WTC11 (cell line): ENCODE measurements at regions of chr13 and their contacts with region 1.

Region 1: DNA sequence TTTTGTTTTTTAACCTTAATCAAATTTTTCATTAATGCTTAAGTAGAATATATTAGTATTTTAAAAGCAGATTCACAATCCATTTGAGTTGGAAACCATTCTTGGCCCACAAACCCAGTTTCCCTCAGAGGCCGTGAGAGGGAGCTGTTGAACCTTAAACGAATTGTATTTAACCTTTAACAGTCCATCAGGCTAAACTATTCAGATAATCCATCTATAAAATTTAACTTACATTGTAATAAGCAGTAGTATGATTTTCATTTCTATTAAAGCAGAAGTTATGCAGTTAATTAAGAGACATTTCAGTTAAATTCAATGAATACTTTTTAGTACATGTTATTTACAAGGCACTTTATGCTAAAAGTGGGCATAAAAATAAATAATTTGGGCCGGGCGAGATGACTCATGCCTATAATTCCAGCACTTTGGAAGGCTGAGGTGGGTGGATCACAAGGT is 123.1 kb upstream of the C1QTNF9B start:
- DNase-seq: peak; percentile 53
- ATAC-seq: 0 out of 2 replicates have a peak, but pooled peaks have one; percentile 44
- H3K4me3 Mint-ChIP-seq: no peak overlapping the region
- H3K27ac Mint-ChIP-seq: no peak overlapping the region
- H3K4me1 Mint-ChIP-seq: no peaks in the 10 kb centered on the region
- H3K27me3 Mint-ChIP-seq: no peaks in the 10 kb centered on the region; the same call in 1 of the 2 replicates
- CTCF ChIP-seq: peak; percentile 29; the same call in 1 of the 2 replicates

Region 2: GRCh38 chr13:24005755-24006281 is 14.6 kb before region 1 on chr13:
- CTCF ChIA-PET with region 1: interaction called, 17 read pairs
- POLR2A ChIA-PET with region 1: no interaction called
- DNase-seq: no peak
- ATAC-seq: no peak
- H3K4me3 Mint-ChIP-seq: no peak overlapping the region
- H3K27ac Mint-ChIP-seq: no peak overlapping the region; the same call in 1 of the 2 replicates
- H3K4me1 Mint-ChIP-seq: peaks cover 21% of the 10 kb centered on the region
- H3K27me3 Mint-ChIP-seq: no peaks in the 10 kb centered on the region; the same call in 1 of the 2 replicates
- CTCF ChIP-seq: no peak

Region 3: DNA sequence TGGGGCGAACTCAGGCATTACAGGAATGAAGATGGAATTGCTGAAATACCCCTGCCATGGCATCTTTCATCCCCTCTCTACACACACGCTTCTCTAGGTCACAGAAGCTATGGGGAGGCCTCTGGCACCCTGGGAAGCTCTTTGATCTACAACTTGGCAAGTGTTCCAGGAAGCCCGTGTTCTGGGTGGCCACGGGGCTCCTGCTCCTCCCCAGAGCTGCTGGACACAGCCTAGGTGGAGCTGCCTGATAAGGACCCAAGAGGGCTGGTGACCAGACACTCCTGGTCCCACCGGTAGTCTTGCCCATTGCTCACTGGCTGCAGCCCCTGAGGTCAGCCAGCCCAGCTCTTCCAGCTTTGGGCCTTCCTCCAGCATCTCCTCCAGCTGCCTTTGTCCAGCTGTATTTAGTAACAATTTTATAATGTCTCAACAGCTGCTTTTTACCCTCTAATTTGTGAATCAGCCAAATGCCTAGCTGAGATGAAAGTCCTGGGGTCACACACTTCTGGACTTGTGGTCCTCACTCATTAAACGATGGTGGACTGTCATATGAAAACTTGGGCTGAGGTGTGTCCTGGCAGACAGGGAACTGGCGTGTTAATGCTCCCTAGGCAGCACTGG is 67.3 kb after region 1 on chr13:
- CTCF ChIA-PET with region 1: no interaction called
- POLR2A ChIA-PET with region 1: no interaction called
- DNase-seq: no peak
- ATAC-seq: no peak
- H3K4me3 Mint-ChIP-seq: no peak overlapping the region
- H3K27ac Mint-ChIP-seq: no peak overlapping the region
- H3K4me1 Mint-ChIP-seq: peaks cover 22% of the 10 kb centered on the region
- H3K27me3 Mint-ChIP-seq: no peaks in the 10 kb centered on the region
- CTCF ChIP-seq: no peak